ENCODE measurements at regions of chr9 and their contacts with region 1.

Region 1: DNA sequence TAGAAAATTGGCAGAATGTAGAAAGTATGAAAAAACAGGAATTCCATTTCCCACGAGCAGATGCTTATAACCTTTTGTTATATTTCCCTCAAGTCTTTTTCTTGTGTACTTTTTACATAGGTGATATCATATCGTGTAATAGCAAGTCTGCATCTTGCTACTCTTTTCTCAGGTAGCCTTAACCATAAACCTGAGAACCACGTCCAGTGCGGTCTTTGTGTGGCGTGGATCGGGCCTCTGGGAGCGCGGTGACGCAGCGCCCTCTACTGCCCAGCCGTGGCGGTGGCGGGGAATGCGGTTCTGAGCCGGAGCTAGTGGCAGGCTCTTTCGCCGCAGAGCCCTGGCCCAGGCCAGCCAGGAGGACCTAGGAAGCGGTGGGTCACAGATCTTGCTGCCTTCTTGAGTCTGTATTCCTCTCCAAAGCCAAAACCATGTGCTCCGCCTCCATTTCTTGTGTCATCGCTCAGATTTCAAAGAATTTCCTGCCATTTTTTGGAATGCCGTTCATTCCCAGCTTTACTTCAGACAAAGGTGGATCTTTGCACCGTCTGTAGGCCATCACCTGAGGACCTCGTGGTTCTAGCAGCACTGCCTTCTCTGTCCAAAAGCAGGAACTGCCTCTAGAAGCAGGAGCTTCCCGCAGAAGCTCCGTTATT is 71.9 kb downstream of the MVB12B start:
- DNase-seq: peak; percentile 81
- ATAC-seq: peak; percentile 45
- H3K4me3 Mint-ChIP-seq: peak overlapping the region; percentile 32
- H3K27ac Mint-ChIP-seq: peak overlapping the region; percentile 72
- H3K4me1 Mint-ChIP-seq: peaks cover 91% of the 10 kb centered on the region
- H3K27me3 Mint-ChIP-seq: no peaks in the 10 kb centered on the region

Region 2: GRCh38 chr9:126164796-126165525 is 233.6 kb before region 1 on chr9:
- CTCF ChIA-PET with region 1: no interaction called
- POLR2A ChIA-PET with region 1: no interaction called
- DNase-seq: no peak
- ATAC-seq: no peak
- H3K4me3 Mint-ChIP-seq: no peak overlapping the region
- H3K27ac Mint-ChIP-seq: no peak overlapping the region
- H3K4me1 Mint-ChIP-seq: no peaks in the 10 kb centered on the region
- H3K27me3 Mint-ChIP-seq: peaks cover 11% of the 10 kb centered on the region

Region 3: GRCh38 chr9:126307322-126308061 is 91.0 kb before region 1 on chr9:
- CTCF ChIA-PET with region 1: interaction called, 96 read pairs
- POLR2A ChIA-PET with region 1: interaction called, 3 read pairs
- DNase-seq: peak; percentile 4
- ATAC-seq: no peak
- H3K4me3 Mint-ChIP-seq: no peak overlapping the region
- H3K27ac Mint-ChIP-seq: no peak overlapping the region
- H3K4me1 Mint-ChIP-seq: peaks cover 9% of the 10 kb centered on the region
- H3K27me3 Mint-ChIP-seq: peaks cover 6% of the 10 kb centered on the region

Region 4: DNA sequence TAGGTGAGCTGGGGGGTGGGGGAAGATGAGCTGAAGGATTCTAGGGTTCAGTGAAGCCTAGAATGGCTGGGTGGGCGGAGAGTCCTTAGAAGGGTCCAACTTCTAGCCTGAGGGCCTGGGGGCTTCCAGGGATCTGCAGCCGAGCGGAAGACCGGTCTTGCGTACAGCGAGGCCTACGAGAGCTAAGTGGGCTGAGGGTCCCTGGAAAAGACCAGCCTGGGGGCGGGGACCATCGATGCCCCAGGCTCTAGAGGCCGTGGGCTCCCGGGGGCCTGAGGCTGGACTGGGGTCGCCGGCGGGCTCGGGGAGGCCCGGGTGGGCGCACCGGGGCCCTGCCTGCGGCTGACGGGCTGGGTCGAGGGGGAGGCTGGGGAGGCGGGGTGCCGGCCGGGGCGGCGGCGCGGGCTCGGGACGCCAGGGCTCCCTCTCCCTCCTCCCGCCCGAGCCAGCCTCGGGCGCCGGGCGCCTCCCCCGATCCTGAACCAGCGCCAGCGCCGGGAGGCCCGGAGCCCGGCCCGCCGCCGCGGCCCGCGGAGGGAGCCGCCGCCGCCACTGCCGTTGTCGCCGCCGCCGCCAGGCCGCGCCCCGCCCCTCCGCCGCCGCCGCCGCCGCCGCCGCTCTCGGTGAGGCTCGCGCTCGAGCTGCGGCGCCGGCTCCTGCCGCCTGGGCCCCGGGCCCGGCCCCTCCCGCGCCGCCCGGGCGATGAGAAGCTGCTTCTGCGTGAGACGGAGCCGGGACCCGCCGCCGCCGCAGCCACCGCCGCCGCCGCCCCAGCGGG is 72.1 kb before region 1 on chr9 and contains the start of gene MVB12B:
- CTCF ChIA-PET with region 1: interaction called, 67 read pairs
- POLR2A ChIA-PET with region 1: interaction called, 8 read pairs
- DNase-seq: peak; percentile 40
- ATAC-seq: peak; percentile 66
- H3K4me3 Mint-ChIP-seq: peak within 1 kb of the TSS; percentile 77
- H3K27ac Mint-ChIP-seq: peak within 1 kb of the TSS; percentile 83
- H3K4me1 Mint-ChIP-seq: peaks cover 49% of the 10 kb centered on the region
- H3K27me3 Mint-ChIP-seq: peaks cover 2% of the 10 kb centered on the region
- total RNA-seq, gene MVB12B: 17.4 to 19.9 TPM

Region 5: DNA sequence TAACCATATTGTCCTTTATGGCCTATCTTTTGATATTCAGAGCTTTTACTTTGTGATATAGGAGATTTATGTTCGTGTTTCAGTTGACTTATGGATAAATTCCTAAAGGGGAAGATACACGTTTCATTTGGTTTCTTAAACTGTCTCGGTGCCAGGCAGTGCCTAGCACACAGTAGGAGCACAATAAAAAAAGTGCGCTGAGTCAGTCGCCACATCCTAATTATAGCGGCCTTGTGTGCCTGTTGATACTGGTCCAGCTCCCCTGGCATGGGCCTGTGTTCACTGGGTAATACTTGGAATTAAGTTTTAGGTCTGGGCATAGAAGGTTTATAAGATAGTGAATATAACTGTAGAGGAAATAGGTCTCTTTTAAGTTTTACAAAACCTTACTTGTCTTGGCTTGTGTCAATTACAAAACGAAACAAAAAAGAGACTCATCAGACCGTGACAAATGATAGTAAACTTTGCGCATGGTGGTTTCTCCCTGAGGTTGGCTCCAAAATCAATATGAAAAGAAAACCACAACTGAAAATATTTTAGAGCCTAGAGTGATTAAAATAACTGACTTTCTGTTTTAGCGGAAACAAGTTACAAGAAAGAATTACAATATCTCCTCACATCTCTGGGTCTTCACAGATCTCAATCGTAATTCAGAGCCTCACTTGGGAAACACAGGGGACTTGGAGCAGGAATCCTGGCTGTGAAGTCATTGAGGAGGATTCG is 12.9 kb after region 1 on chr9:
- CTCF ChIA-PET with region 1: interaction called, 50 read pairs
- POLR2A ChIA-PET with region 1: interaction called, 5 read pairs
- DNase-seq: peak; percentile 78
- ATAC-seq: peak; percentile 84
- H3K4me3 Mint-ChIP-seq: peak overlapping the region; percentile 71
- H3K27ac Mint-ChIP-seq: peak overlapping the region; percentile 97
- H3K4me1 Mint-ChIP-seq: peaks cover 58% of the 10 kb centered on the region
- H3K27me3 Mint-ChIP-seq: no peaks in the 10 kb centered on the region

Region 6: GRCh38 chr9:126471084-126471624 is 72.6 kb after region 1 on chr9:
- CTCF ChIA-PET with region 1: interaction called, 75 read pairs
- POLR2A ChIA-PET with region 1: interaction called, 4 read pairs
- DNase-seq: peak; percentile 92
- ATAC-seq: peak; percentile 87
- H3K4me3 Mint-ChIP-seq: peak overlapping the region; percentile 55
- H3K27ac Mint-ChIP-seq: peak overlapping the region; percentile 93
- H3K4me1 Mint-ChIP-seq: peaks cover 76% of the 10 kb centered on the region
- H3K27me3 Mint-ChIP-seq: no peaks in the 10 kb centered on the region

Region 7: GRCh38 chr9:126490871-126491567 is 92.5 kb after region 1 on chr9:
- CTCF ChIA-PET with region 1: interaction called, 142 read pairs
- POLR2A ChIA-PET with region 1: no interaction called
- DNase-seq: peak; percentile 74
- ATAC-seq: peak; percentile 53
- H3K4me3 Mint-ChIP-seq: no peak overlapping the region
- H3K27ac Mint-ChIP-seq: no peak overlapping the region
- H3K4me1 Mint-ChIP-seq: peaks cover 22% of the 10 kb centered on the region
- H3K27me3 Mint-ChIP-seq: no peaks in the 10 kb centered on the region

Region 8: GRCh38 chr9:126506361-126506941 is 107.9 kb after region 1 on chr9:
- CTCF ChIA-PET with region 1: no interaction called
- POLR2A ChIA-PET with region 1: no interaction called
- DNase-seq: no peak
- ATAC-seq: no peak
- H3K4me3 Mint-ChIP-seq: no peak overlapping the region
- H3K27ac Mint-ChIP-seq: no peak overlapping the region
- H3K4me1 Mint-ChIP-seq: no peaks in the 10 kb centered on the region
- H3K27me3 Mint-ChIP-seq: peaks cover 6% of the 10 kb centered on the region